IMR-90 (cell line): ENCODE measurements at regions of chr15 and their contacts with region 1.

Region 1: DNA sequence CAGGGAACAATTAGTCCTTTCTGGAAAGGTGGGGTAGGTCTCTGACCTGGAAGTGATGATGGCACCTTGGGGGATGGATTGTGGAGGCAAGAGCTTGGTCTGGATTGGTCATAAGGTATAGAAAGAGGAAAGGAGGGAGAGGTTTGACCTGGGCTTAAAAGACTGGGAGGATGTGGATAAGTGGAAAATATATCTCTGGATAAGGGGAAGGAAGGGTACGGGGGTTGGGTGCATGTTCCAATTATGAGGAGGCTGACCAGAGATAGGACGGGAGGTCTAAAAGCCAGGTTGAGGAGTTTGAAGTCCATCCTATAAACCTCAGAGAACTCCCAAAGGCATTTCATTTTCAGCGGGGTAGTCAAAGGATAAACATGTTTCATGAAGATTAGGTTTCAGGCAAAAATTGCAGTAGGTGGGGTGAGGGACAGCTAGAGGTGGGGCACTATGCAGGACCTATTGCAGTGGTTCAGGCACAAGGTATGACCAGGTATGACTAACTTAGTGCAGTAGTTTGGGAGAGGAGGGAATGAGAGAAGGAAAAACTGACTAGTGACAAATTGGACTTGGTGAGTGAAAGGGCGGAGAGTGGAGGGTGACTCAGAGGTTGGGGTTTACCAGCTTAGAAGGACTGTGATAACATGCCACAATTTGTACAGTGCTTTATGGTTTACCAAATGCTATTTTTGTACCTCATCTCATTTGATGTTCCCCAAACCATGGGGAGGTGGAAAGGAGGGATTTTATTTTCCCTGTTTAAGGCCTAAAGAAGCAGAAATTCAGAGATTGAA is 10.7 kb downstream of the PDE8A start:
- DNase-seq: peak; percentile 87
- ATAC-seq: peak; percentile 94
- H3K4me3 ChIP-seq: no peak overlapping the region
- H3K27ac ChIP-seq: no peak overlapping the region
- H3K4me1 ChIP-seq: peaks cover 5% of the 10 kb centered on the region
- H3K27me3 ChIP-seq: no peaks in the 10 kb centered on the region
- CTCF ChIP-seq: no peak
- POLR2A ChIP-seq: no peak
- RAD21 ChIP-seq: no peak

Region 2: DNA sequence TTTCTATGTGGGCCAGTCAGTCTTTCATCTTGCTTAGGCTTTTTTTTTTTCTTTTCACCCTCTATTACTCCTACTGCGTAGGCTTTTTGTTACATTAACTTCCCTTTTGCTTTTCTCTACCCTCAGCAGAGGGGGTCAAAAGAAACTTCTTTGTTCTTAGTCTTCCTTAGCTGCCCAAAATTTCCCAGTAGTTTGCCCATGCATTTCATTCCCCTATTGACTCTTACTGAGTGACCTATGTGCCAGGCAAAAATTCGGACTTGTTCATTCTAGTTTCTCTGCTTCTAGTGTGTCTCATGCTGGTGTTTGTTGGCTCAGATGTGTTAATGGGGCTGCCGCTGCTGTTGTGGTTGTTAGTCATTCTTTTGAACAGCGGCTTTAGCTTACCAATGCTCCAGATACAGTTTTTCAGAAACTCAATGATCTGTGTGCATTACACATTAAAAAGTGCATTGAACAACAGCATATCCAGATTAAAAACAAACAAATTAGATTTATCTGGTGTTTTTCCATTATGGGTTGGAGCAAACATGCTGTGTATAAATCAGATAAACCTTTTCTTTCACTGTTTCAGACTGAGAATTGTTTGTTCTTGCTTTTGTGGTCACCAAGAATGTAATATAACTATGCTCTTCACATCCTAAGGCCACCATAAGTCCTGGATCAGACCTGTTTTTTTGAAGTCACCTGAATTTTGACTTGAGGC is 32.3 kb after region 1 on chr15:
- CTCF ChIA-PET with region 1: no interaction called
- POLR2A ChIA-PET with region 1: no interaction called
- dilution Hi-C with region 1: no loop called
- in situ Hi-C with region 1: no loop called
- intact Hi-C with region 1: loop called (anchors 5 kb)
- DNase-seq: peak; percentile 62
- ATAC-seq: peak; percentile 27; the same call in 1 of the 2 replicates
- H3K4me3 ChIP-seq: no peak overlapping the region
- H3K27ac ChIP-seq: no peak overlapping the region
- H3K4me1 ChIP-seq: peaks cover 13% of the 10 kb centered on the region
- H3K27me3 ChIP-seq: no peaks in the 10 kb centered on the region
- CTCF ChIP-seq: no peak
- POLR2A ChIP-seq: no peak
- RAD21 ChIP-seq: no peak